ENCODE measurements at regions of chr11 and their contacts with region 1.

Region 1: DNA sequence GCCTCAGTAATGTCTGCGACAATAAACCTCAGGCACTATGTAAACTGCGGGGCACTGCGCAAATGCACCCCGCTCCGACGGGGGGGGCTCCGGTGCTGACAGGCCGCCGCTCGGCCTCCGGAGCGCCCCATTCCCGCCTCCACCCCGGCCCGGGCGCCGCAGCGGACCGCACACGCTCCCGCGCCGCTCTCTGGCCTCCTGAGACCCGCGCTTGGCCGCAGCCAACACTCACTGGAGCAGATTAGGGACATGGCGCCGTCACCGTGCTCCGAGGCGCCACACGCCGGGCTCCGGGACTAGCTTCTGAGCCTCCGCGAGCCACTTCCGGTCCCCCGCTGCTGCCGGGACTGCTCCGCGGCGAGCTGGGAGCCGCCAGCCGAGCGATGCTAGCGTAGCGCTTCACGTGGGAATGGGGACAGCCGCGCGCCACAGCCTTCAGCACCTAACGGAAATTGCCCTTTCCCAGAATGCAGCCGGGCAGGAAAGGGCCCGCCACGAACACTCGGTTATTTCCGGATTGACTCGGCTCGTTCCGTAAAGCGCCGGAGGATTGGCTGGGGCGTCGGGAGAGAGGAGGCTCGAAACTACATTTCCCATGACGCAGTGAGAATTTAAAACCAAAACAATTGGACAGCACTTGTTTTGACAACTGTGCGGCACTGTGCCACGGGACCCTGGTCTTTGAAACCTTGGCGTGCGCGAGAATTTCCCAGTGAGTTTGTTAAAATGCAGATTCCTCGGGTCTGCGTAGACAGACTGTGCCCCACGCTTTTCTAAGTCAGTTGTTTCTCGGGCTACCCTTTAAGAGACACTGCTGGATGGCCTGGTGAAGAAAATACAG is at the start of gene PRPF19:
- DNase-seq: peak; percentile 97 to 100 (median 99)
- ATAC-seq: peak; percentile 93
- H3K4me3 ChIP-seq: peak within 1 kb of the TSS; percentile 66
- H3K4me3 Mint-ChIP-seq: peak within 1 kb of the TSS; percentile 93
- H3K27ac ChIP-seq: peak within 1 kb of the TSS; percentile 85 to 93
- H3K27ac Mint-ChIP-seq: peak within 1 kb of the TSS; percentile 96
- H3K4me1 ChIP-seq: peaks cover 42% of the 10 kb centered on the region
- H3K4me1 Mint-ChIP-seq: peaks cover 56% of the 10 kb centered on the region
- H3K27me3 ChIP-seq: no peaks in the 10 kb centered on the region
- H3K27me3 Mint-ChIP-seq: no peaks in the 10 kb centered on the region
- CTCF ChIP-seq: no peak
- total RNA-seq, gene PRPF19: 63.2 to 67.3 TPM

Region 2: GRCh38 chr11:60831143-60831500 is 75.2 kb before region 1 on chr11:
- CTCF ChIA-PET with region 1: interaction called, 10 read pairs
- POLR2A ChIA-PET with region 1: no interaction called
- intact Hi-C with region 1: no loop called
- DNase-seq: peak; percentile 68 to 89 (median 76)
- ATAC-seq: peak; percentile 94
- H3K4me3 ChIP-seq: peak overlapping the region; percentile 19
- H3K4me3 Mint-ChIP-seq: no peak overlapping the region
- H3K27ac ChIP-seq: no peak overlapping the region
- H3K27ac Mint-ChIP-seq: no peak overlapping the region
- H3K4me1 ChIP-seq: peaks cover 5% of the 10 kb centered on the region
- H3K4me1 Mint-ChIP-seq: no peaks in the 10 kb centered on the region
- H3K27me3 ChIP-seq: peaks cover 0 to 3% of the 10 kb centered on the region in 2 experiments
- H3K27me3 Mint-ChIP-seq: peaks cover 17% of the 10 kb centered on the region
- CTCF ChIP-seq: peak; percentile 90

Region 3: DNA sequence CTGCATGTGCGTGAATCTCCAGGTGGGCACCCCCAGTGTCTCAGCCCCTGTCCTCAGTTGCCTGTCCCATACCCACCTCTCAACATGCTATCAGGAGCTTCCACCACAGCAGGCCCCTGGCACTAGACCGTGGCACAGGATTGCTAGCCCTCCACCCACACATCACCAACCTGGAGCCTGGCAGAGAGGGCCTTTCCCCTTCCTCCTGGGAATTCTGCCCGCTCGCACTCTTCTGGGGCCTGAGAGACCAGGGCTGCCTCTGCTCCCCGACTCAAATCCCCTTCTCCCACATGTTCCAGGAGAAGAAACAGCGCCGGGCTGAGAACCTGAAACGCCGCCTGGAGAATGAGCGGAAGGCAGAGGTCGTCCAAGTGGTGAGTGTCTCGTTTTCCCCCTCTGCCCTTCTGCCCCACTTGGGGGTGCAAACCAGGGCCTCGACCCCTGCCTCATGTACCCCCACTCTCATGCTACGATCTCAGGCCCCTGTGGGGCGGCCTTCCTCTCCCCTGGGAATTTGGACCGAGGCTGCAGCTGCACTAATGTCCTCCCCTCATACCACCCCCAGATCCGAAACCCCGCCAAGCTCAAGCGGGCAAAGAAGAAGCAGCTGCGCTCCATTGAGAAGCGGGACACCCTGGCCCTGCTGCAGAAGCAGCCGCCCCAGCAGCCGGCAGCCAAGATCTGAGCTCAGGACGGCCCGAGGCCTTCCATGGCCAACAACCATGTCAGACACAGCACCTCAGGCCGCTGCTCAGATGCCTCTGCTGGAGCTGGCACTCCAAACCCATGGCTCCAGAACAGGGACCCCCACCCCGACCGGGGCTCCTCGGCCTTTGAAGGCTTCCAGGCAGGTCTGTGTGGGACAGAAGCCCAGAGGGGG is 56.5 kb before region 1 on chr11:
- CTCF ChIA-PET with region 1: no interaction called
- POLR2A ChIA-PET with region 1: no interaction called
- intact Hi-C with region 1: no loop called
- DNase-seq: no peak
- ATAC-seq: no peak
- H3K4me3 ChIP-seq: no peak overlapping the region
- H3K4me3 Mint-ChIP-seq: no peak overlapping the region
- H3K27ac ChIP-seq: no peak overlapping the region
- H3K27ac Mint-ChIP-seq: no peak overlapping the region
- H3K4me1 ChIP-seq: peaks cover 7% of the 10 kb centered on the region
- H3K4me1 Mint-ChIP-seq: peaks cover 7% of the 10 kb centered on the region
- H3K27me3 ChIP-seq: no peaks in the 10 kb centered on the region
- H3K27me3 Mint-ChIP-seq: no peaks in the 10 kb centered on the region
- CTCF ChIP-seq: no peak

Region 4: DNA sequence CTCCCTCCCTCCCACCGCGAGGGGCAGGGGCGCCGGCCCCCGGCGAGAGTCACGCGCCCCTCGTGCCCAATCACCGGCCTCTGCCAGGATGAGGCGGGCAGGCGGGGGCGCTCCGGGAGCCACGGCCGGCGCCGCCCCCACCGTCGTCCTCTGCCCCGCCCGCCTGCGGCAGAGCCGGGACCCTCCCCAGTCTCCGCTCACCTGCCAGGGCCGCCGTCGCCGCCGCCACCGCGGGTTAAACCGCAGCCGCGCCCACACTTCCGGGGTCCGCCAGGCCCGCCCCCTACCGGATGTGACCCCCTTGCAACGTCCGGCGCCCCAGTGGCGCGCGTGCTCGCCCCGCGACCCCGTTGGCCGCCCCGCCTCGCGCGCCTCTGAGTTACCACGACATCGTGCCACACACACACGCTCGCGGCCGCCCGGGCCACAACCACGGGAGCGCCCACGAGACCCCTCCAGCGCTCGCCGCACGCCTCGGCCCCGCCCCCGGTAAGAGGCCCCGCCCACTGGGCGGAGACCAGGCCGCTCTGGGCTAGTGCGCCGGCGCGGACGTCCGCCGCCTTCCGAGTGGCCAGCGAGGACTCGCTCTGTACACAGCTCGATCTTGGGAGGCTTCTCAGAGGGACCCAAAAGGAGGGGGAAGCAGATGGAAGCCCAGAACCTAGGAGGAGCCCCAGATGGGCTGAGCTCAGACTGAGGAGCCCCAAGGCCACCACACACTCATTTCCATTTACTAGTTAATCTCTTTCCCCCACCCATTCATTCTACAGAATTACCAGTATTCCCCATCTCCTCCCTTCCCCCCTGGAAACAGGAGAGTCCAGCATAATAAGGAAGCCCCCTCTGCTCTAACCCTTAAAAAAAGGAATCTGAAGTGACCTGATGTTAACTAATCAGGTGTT is 255.1 kb after region 1 on chr11 and contains the start of gene VPS37C:
- CTCF ChIA-PET with region 1: no interaction called
- POLR2A ChIA-PET with region 1: no interaction called
- intact Hi-C with region 1: loop called in 1 of 2 experiments (anchors 1 kb)
- DNase-seq: peak; percentile 78 to 96 (median 89)
- ATAC-seq: peak; percentile 73
- H3K4me3 ChIP-seq: peak within 1 kb of the TSS; percentile 70
- H3K4me3 Mint-ChIP-seq: peak within 1 kb of the TSS; percentile 91
- H3K27ac ChIP-seq: peak within 1 kb of the TSS; percentile 81 to 85
- H3K27ac Mint-ChIP-seq: peak within 1 kb of the TSS; percentile 85
- H3K4me1 ChIP-seq: peaks cover 20% of the 10 kb centered on the region
- H3K4me1 Mint-ChIP-seq: peaks cover 62% of the 10 kb centered on the region
- H3K27me3 ChIP-seq: no peaks in the 10 kb centered on the region
- H3K27me3 Mint-ChIP-seq: no peaks in the 10 kb centered on the region
- CTCF ChIP-seq: no peak
- total RNA-seq, gene VPS37C: 1.8 to 2.0 TPM

Region 5: DNA sequence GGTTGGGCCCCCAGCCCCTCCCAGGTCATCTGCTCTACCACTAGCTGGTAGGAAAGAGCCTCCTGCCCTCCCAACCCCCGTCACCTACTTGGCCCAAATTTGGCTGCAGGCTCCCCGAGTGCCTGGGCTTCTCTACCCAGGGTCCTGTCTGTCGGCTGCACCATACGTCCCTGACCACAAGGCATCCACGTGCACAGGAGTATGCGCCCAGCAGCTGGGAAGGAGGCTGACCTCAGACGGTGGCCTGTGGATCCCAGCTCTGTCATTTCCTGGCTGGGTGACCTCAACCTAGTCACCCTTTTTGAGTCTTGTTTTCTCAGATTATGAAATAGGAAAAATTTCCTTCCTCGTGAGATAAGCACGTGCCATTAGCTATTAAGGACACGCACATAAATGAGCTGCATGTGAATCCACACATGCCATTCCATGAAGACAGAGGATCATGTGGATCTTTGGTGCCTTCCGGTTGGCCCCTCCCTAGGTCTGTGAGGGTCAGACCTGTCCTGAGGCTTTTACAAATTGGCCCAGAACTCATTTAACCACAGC is 441.6 kb after region 1 on chr11:
- CTCF ChIA-PET with region 1: no interaction called
- POLR2A ChIA-PET with region 1: no interaction called
- intact Hi-C with region 1: no loop called
- DNase-seq: peak in 3 of 14 experiments; percentile 21 to 74 (median 60)
- ATAC-seq: no peak
- H3K4me3 ChIP-seq: no peak overlapping the region
- H3K4me3 Mint-ChIP-seq: no peak overlapping the region
- H3K27ac ChIP-seq: no peak overlapping the region
- H3K27ac Mint-ChIP-seq: no peak overlapping the region
- H3K4me1 ChIP-seq: no peaks in the 10 kb centered on the region
- H3K4me1 Mint-ChIP-seq: no peaks in the 10 kb centered on the region
- H3K27me3 ChIP-seq: no peaks in the 10 kb centered on the region
- H3K27me3 Mint-ChIP-seq: no peaks in the 10 kb centered on the region
- CTCF ChIP-seq: no peak

Region 6: GRCh38 chr11:61429691-61430582 is 523.6 kb after region 1 on chr11 and contains the starts of genes CPSF7 and SDHAF2:
- CTCF ChIA-PET with region 1: no interaction called
- POLR2A ChIA-PET with region 1: no interaction called
- intact Hi-C with region 1: loop called in 1 of 2 experiments (anchors 2 kb)
- DNase-seq: peak; percentile 94 to 99 (median 97)
- ATAC-seq: peak; percentile 81
- H3K4me3 ChIP-seq: peak within 1 kb of the TSS; percentile 93
- H3K4me3 Mint-ChIP-seq: peak within 1 kb of the TSS; percentile 92
- H3K27ac ChIP-seq: peak within 1 kb of the TSS; percentile 99
- H3K27ac Mint-ChIP-seq: peak within 1 kb of the TSS; percentile 99
- H3K4me1 ChIP-seq: peaks cover 41% of the 10 kb centered on the region
- H3K4me1 Mint-ChIP-seq: peaks cover 81% of the 10 kb centered on the region
- H3K27me3 ChIP-seq: no peaks in the 10 kb centered on the region
- H3K27me3 Mint-ChIP-seq: no peaks in the 10 kb centered on the region
- CTCF ChIP-seq: no peak
- total RNA-seq, gene CPSF7: 111 to 116 TPM
- total RNA-seq, gene SDHAF2: 28.7 to 33.0 TPM

Region 7: DNA sequence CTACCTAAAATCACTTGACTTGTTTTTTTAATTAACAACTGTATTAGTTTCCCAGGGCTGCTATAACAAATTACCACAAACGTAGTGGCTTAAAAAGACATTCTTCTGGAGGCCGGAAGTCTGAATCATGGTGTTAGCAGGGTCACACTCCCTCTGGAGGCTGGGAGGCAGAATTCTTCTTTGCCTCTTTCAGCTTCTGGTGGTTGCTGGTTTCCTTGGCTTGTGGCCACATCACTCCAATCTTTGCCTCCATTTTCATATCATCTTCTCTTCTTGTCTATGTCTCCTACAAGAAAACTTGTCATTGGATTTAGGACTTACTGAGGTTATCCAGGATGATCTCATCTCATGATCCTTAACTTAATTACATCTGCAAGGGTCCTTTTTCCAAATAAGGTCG is 1210.1 kb after region 1 on chr11:
- CTCF ChIA-PET with region 1: no interaction called
- POLR2A ChIA-PET with region 1: no interaction called
- intact Hi-C with region 1: loop called in 1 of 2 experiments (anchors 10 kb)
- DNase-seq: no peak
- ATAC-seq: no peak
- H3K4me3 ChIP-seq: no peak overlapping the region
- H3K4me3 Mint-ChIP-seq: no peak overlapping the region
- H3K27ac ChIP-seq: no peak overlapping the region
- H3K27ac Mint-ChIP-seq: no peak overlapping the region
- H3K4me1 ChIP-seq: peaks cover 11% of the 10 kb centered on the region
- H3K4me1 Mint-ChIP-seq: no peaks in the 10 kb centered on the region
- H3K27me3 ChIP-seq: no peaks in the 10 kb centered on the region
- H3K27me3 Mint-ChIP-seq: no peaks in the 10 kb centered on the region
- CTCF ChIP-seq: no peak